ENCODE measurements at regions of chr3 and their contacts with region 1.

Region 1: DNA sequence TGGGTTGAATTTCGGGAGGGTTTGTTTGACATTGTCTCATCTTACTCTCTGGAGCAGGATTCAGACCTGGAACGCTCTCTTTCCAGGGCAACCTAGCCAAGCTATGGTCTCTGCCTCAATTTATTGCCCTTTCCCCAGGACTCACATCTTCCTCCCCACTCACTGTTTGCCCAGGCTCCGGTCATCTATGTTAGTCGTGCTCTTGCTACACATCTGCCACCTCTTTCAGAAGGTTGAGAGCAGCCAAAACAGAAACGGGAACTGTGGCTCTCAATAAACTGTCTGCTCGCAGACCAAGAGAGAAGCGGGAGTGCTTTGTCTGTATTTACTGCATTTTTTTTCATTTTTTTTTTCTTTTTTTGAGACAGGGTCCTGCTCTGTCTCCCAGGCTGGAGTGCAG is 81.6 kb downstream of the ST6GAL1 start:
- DNase-seq: no peak
- ATAC-seq: no peak
- H3K4me3 ChIP-seq: no peak overlapping the region
- H3K27ac ChIP-seq: no peak overlapping the region
- H3K4me1 ChIP-seq: peaks cover 14% of the 10 kb centered on the region
- H3K27me3 ChIP-seq: no peaks in the 10 kb centered on the region
- CTCF ChIP-seq: no peak

Region 2: DNA sequence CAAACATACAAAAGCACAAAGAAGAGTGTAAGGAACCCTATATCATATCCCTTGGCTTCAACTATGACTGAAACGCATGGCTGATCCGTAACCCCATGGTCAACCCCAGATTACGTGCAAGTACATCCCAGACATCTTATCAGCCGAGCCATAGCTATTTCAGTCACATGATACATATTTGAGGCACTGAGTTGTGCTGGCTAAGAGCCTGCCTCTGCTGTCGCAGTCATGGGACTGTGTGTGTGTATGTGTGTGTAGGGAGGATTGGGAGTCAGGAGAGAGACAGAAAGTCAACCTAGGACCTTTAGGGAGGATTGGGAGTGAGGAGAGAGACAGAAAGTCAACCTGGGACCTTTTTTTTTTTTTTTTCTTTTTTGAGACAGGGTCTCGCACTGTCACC is 73.2 kb before region 1 on chr3:
- CTCF ChIA-PET with region 1: no interaction called
- POLR2A ChIA-PET with region 1: interaction called, 13 read pairs
- intact Hi-C with region 1: no loop called
- DNase-seq: no peak
- ATAC-seq: no peak
- H3K4me3 ChIP-seq: no peak overlapping the region
- H3K27ac ChIP-seq: no peak overlapping the region
- H3K4me1 ChIP-seq: no peaks in the 10 kb centered on the region
- H3K27me3 ChIP-seq: no peaks in the 10 kb centered on the region
- CTCF ChIP-seq: no peak

Region 3: DNA sequence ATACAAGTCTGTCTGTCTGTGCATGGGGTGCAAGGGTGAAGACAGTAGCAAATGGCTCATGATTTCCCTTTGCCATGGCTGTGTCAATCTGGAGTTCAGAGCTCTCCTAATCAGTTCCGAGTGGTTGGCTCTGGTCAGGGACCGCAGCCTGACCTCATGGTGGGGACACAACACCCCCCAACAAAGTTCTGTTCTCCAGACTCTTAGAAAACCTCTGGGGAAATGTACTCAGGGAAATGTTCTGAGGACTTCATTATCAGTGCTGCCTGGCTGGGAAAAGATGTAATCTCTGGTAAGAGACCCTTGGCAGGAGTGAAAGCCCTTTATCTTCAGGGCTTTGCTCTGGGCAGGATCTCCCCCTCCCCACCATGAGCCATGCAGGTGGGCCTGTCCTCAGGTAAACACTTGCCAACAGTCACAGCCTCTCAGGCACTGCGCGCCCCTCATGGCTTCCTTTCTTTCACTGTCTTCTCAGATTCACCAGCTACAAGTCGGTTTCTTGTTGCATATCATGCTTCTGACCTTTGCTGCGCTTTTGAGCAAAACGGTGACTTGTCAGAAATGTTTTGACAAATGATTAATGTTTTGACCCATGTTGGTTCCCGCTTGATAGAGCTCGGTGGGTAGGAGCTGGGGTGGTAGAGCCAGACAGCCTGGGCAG is 13.9 kb after region 1 on chr3:
- CTCF ChIA-PET with region 1: no interaction called
- POLR2A ChIA-PET with region 1: no interaction called
- intact Hi-C with region 1: no loop called
- DNase-seq: no peak
- ATAC-seq: no peak
- H3K4me3 ChIP-seq: no peak overlapping the region
- H3K27ac ChIP-seq: no peak overlapping the region
- H3K4me1 ChIP-seq: no peaks in the 10 kb centered on the region
- H3K27me3 ChIP-seq: no peaks in the 10 kb centered on the region
- CTCF ChIP-seq: no peak

Region 4: GRCh38 chr3:187519428-187519890 is 507.5 kb after region 1 on chr3:
- CTCF ChIA-PET with region 1: no interaction called
- POLR2A ChIA-PET with region 1: no interaction called
- intact Hi-C with region 1: no loop called
- DNase-seq: no peak
- ATAC-seq: no peak
- H3K4me3 ChIP-seq: no peak overlapping the region
- H3K27ac ChIP-seq: no peak overlapping the region
- H3K4me1 ChIP-seq: no peaks in the 10 kb centered on the region
- H3K27me3 ChIP-seq: peaks cover 93% of the 10 kb centered on the region
- CTCF ChIP-seq: no peak

Measured in PC-3 (cell line).